GM23248 (cell line): ENCODE measurements at regions of chr17 and their contacts with region 1.

Region 1: DNA sequence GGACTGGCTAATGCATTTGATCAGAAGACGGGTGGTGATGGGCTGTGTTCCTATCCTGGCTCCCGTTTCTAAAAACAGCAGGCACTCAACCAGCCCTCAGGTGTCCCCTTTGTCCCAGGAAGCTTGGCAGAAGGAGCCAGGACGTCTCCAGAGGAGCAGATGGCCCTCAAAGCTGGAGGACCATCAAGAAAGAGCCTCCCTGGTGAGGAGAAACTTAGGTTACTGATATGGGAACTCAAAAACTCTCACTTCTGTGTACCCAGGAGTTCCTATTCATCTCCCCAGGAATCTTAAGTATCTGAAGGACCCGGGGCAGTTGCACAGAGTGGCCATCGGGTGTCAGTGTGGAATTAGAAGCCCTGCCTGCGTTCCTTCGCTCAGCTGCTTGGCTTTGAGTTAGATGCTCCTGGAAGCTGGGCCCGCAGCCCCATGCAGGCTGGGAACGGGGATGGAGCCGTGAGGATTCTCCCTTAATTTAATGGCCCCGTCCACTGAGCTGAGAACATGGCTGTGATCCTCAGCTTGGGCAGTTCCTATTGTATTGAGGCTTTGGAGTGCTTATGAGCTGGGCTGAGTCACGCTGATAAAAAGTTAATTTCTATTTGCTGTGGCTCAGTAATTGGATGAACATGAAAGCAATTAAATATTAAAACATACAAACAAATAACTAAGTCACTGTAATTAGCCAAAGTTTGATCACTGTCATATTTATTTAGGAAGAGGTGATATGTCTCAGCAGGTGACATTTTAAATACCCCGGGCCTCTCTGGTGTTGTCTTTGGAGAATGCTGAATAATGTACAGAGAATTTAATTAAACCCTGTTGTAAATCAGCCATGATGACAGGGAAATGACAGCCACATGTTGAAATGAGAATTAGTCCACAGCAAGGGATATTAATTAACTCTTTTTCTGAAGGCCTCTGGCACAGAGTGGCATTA is 402.1 kb downstream of the SEC14L1 start:
- DNase-seq: peak; percentile 90
- H3K4me3 ChIP-seq: no peak overlapping the region
- H3K27ac ChIP-seq: no peak overlapping the region
- H3K4me1 ChIP-seq: no peaks in the 10 kb centered on the region
- H3K27me3 ChIP-seq: peaks cover 39% of the 10 kb centered on the region

Region 2: GRCh38 chr17:77451894-77452852 is 90.6 kb before region 1 on chr17:
- in situ Hi-C with region 1: no loop called
- DNase-seq: peak; percentile 89
- H3K4me3 ChIP-seq: peak overlapping the region; percentile 61
- H3K27ac ChIP-seq: peak overlapping the region; percentile 69
- H3K4me1 ChIP-seq: peaks cover 39% of the 10 kb centered on the region
- H3K27me3 ChIP-seq: no peaks in the 10 kb centered on the region

Region 3: GRCh38 chr17:78013683-78014467 is 471.1 kb after region 1 on chr17:
- in situ Hi-C with region 1: loop called (anchors 10 kb)
- DNase-seq: peak; percentile 73
- H3K4me3 ChIP-seq: no peak overlapping the region
- H3K27ac ChIP-seq: no peak overlapping the region
- H3K4me1 ChIP-seq: no peaks in the 10 kb centered on the region
- H3K27me3 ChIP-seq: no peaks in the 10 kb centered on the region